Activated naive CD8-positive, alpha-beta T cell treated with anti-CD3 and anti-CD28 coated beads, Interleukin-2, amount 10 ng/mL, durations not matched to agents 7 days and 5 days (primary cell): ENCODE measurements at regions of chr3 and their contacts with region 1.

Region 1: GRCh38 chr3:9396700-9397521 is 504 bp upstream of the SETD5 start:
- DNase-seq: peak; percentile 100
- ATAC-seq: peak; percentile 75
- H3K4me3 Mint-ChIP-seq: peak overlapping the region; percentile 97
- H3K27ac Mint-ChIP-seq: peak overlapping the region; percentile 98
- H3K4me1 Mint-ChIP-seq: peaks cover 48% of the 10 kb centered on the region
- H3K27me3 Mint-ChIP-seq: no peaks in the 10 kb centered on the region

Region 2: GRCh38 chr3:9362731-9363530 is 34.0 kb before region 1 on chr3 and contains the start of gene THUMPD3:
- POLR2A ChIA-PET with region 1: interaction called, 98 read pairs
- DNase-seq: peak; percentile 95
- ATAC-seq: peak; percentile 96
- H3K4me3 Mint-ChIP-seq: peak within 1 kb of the TSS; percentile 93
- H3K27ac Mint-ChIP-seq: peak within 1 kb of the TSS; percentile 96
- H3K4me1 Mint-ChIP-seq: peaks cover 11% of the 10 kb centered on the region
- H3K27me3 Mint-ChIP-seq: peaks cover 6% of the 10 kb centered on the region
- total RNA-seq, gene THUMPD3: 46.6 to 49.9 TPM

Region 3: GRCh38 chr3:9420850-9421549 is 24.1 kb after region 1 on chr3:
- POLR2A ChIA-PET with region 1: interaction called, 12 read pairs
- DNase-seq: no peak
- ATAC-seq: no peak
- H3K4me3 Mint-ChIP-seq: no peak overlapping the region
- H3K27ac Mint-ChIP-seq: peak overlapping the region; percentile 12
- H3K4me1 Mint-ChIP-seq: peaks cover 36% of the 10 kb centered on the region
- H3K27me3 Mint-ChIP-seq: no peaks in the 10 kb centered on the region

Region 4: DNA sequence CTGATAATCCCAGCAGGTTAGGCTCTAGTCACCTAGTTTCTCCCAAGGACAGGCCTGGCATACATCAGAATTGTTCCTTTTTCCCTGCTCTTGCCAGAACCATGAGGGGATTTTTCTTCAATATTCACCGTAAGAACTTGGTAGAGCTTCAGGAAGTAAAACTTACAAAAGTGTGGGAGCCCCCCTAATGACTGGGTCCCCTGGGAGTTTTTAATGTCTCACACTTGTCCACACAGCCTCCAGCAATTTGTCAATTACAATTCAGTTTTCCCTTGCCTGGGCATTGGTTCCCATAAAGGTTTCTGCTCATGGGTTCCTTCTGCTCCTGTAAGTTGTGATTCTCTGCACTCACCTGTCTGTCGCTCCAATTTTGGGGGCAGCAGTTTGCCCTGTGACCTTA is 128.2 kb after region 1 on chr3:
- POLR2A ChIA-PET with region 1: no interaction called
- DNase-seq: no peak
- ATAC-seq: no peak
- H3K4me3 Mint-ChIP-seq: no peak overlapping the region
- H3K27ac Mint-ChIP-seq: no peak overlapping the region
- H3K4me1 Mint-ChIP-seq: no peaks in the 10 kb centered on the region
- H3K27me3 Mint-ChIP-seq: peaks cover 28% of the 10 kb centered on the region

Region 5: GRCh38 chr3:9681723-9682081 is 284.8 kb after region 1 on chr3:
- POLR2A ChIA-PET with region 1: no interaction called
- DNase-seq: no peak
- ATAC-seq: no peak
- H3K4me3 Mint-ChIP-seq: no peak overlapping the region
- H3K27ac Mint-ChIP-seq: no peak overlapping the region
- H3K4me1 Mint-ChIP-seq: no peaks in the 10 kb centered on the region
- H3K27me3 Mint-ChIP-seq: no peaks in the 10 kb centered on the region